Activated CD4-positive, alpha-beta memory T cell treated with anti-CD3 and anti-CD28 coated beads, Interleukin-2, amount 10 ng/mL, durations not matched to agents 7 days and 5 days (primary cell): ENCODE measurements at regions of chr3 and their contacts with region 1.

Region 1: DNA sequence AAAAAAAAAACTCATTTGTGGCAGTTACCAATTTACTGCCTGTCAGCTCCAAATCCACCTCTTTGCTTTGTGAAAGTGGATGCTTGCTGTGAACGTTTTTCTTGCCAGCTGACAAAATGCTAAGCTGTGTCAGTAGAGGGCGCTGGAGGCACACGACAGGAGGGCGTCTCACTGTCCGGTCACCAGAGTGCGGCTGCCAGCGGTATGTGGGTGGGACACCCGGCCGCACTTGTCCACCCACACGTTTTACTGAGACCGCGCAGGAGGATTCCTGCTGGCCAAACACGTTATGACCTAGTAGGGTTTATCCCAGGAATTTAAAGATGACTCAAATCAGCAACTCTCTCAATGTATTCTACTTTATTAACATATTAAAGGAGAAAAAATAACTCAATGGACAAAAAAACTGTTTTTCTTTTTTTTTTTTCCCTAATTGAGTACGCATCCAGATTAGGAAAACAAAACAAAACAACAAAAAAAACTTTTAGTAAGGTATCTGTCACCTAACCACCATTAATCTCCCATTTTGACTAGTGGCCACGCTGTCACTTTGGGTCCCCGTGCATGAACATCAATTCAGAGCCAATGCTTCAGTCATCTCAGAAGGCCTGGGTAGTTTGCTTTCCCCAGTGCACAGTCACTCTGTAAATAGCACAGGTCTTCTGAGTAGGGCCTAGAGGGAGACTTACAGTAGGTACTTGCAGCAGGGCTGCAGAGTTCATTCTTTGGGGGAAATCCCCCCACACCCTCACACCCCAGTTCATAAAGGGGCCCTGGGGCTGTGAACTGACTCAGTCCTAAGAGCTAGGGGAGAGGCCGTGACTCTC is 43.8 kb upstream of the RPL35A start:
- DNase-seq: peak; percentile 82
- H3K4me3 Mint-ChIP-seq: no peak overlapping the region
- H3K27ac Mint-ChIP-seq: no peak overlapping the region
- H3K4me1 Mint-ChIP-seq: peaks cover 20% of the 10 kb centered on the region
- H3K27me3 Mint-ChIP-seq: no peaks in the 10 kb centered on the region

Region 2: GRCh38 chr3:197567904-197568681 is 338.1 kb before region 1 on chr3:
- CTCF ChIA-PET with region 1: no interaction called
- POLR2A ChIA-PET with region 1: no interaction called
- DNase-seq: no peak
- H3K4me3 Mint-ChIP-seq: no peak overlapping the region
- H3K27ac Mint-ChIP-seq: no peak overlapping the region
- H3K4me1 Mint-ChIP-seq: no peaks in the 10 kb centered on the region
- H3K27me3 Mint-ChIP-seq: peaks cover 29% of the 10 kb centered on the region

Region 3: DNA sequence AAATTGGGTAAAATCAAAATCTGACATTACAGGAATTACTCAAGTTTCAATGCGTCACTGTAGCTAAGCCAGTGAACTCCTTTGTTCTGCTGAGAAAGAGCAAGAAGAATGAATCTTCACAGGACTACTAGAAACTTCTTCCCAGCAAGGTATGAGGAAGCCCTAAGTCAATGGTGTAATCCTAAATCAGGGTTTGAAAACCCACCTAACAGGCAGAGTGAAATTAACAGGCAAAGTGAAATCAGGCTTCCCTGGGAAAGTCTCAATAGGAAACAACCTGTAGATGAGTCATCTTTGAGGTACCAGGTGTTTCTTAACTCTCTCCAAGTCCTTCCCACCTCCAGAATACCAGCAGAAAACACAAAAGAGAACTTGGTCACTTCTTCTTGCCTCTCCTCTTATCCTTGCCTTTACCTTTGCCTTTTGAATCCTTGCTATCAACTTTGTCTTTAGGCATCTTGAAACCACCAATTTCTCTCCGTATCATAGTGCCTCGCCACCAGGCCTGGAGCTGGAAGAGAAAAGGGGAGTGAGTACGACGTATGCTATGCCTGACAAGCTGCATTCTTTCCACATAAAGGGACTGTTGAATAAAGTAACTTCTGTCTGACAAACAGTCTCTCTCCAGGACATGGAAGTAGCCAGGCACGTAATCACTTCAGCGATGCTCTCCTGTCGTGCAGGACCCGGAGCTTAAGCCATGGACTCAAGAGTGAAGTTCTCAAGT is 16.9 kb before region 1 on chr3:
- CTCF ChIA-PET with region 1: interaction called, 24 read pairs
- POLR2A ChIA-PET with region 1: no interaction called
- DNase-seq: no peak
- H3K4me3 Mint-ChIP-seq: no peak overlapping the region
- H3K27ac Mint-ChIP-seq: no peak overlapping the region
- H3K4me1 Mint-ChIP-seq: no peaks in the 10 kb centered on the region
- H3K27me3 Mint-ChIP-seq: no peaks in the 10 kb centered on the region

Region 4: GRCh38 chr3:197942956-197943556 is 36.8 kb after region 1 on chr3:
- CTCF ChIA-PET with region 1: interaction called, 34 read pairs
- POLR2A ChIA-PET with region 1: no interaction called
- DNase-seq: no peak
- H3K4me3 Mint-ChIP-seq: no peak overlapping the region
- H3K27ac Mint-ChIP-seq: no peak overlapping the region
- H3K4me1 Mint-ChIP-seq: peaks cover 6% of the 10 kb centered on the region
- H3K27me3 Mint-ChIP-seq: no peaks in the 10 kb centered on the region

Region 5: GRCh38 chr3:198080521-198081280 is 174.5 kb after region 1 on chr3:
- CTCF ChIA-PET with region 1: interaction called, 20 read pairs
- POLR2A ChIA-PET with region 1: no interaction called
- DNase-seq: peak; percentile 81
- H3K4me3 Mint-ChIP-seq: peak overlapping the region; percentile 75
- H3K27ac Mint-ChIP-seq: no peak overlapping the region
- H3K4me1 Mint-ChIP-seq: peaks cover 7% of the 10 kb centered on the region
- H3K27me3 Mint-ChIP-seq: peaks cover 52% of the 10 kb centered on the region